Activated CD4-positive, alpha-beta T cell treated with anti-CD3 and anti-CD28 coated beads, Interleukin-2, amount 10 ng/mL, durations not matched to agents 24 days and 14 days (primary cell): ENCODE measurements at regions of chr6 and their contacts with region 1.

Region 1: GRCh38 chr6:85593438-85594196 is at the start of gene SNX14:
- DNase-seq: peak; percentile 93
- H3K4me3 Mint-ChIP-seq: peak within 1 kb of the TSS; percentile 97
- H3K27ac Mint-ChIP-seq: peak within 1 kb of the TSS; percentile 96
- H3K4me1 Mint-ChIP-seq: peaks cover 20% of the 10 kb centered on the region
- H3K27me3 Mint-ChIP-seq: peaks cover 3% of the 10 kb centered on the region
- total RNA-seq, gene SNX14: 45.4 and 47.1 TPM in 2 replicates

Region 2: DNA sequence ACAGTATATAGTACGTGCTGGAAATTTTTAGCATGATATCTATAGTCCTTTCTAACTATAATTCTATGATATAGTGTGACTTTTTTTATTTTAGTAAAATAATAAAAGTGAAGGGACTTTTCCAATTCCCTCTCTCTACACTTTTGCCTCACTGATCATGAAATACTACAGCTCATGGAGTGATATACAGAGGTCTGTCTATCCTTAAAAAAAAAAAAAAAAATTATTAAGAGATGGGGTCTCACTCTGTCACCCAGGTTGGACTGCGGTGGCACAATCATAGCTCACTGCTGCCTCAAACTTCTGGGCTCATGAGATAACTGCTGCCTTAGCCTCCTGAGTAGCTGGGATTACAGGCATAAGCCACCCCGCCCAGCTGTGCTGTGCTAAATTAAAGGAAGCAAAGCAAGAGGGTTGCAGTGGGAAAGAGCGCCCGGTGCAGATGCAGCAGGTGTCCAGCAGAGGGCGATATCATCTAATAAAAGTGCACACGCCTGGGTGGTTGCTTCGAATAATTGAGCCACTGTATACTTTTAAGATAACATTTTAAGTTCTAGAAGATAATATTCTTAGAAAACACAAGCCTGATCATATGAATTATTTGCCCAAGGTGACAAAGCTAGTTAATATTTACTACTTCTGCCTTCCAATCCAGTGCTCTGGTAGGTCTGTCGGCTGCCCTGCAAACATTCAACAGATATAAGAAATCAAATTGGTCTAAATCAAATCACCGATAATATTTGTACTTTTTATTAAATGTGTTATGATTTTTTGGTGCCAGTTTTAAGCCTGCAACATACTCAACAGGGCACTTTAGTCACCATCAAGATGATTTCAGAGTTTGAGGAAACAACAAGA is 238.6 kb before region 1 on chr6:
- intact Hi-C with region 1: loop called (anchors 10 kb)
- DNase-seq: peak; percentile 90
- H3K4me3 Mint-ChIP-seq: no peak overlapping the region
- H3K27ac Mint-ChIP-seq: no peak overlapping the region
- H3K4me1 Mint-ChIP-seq: no peaks in the 10 kb centered on the region
- H3K27me3 Mint-ChIP-seq: peaks cover 6% of the 10 kb centered on the region

Region 3: DNA sequence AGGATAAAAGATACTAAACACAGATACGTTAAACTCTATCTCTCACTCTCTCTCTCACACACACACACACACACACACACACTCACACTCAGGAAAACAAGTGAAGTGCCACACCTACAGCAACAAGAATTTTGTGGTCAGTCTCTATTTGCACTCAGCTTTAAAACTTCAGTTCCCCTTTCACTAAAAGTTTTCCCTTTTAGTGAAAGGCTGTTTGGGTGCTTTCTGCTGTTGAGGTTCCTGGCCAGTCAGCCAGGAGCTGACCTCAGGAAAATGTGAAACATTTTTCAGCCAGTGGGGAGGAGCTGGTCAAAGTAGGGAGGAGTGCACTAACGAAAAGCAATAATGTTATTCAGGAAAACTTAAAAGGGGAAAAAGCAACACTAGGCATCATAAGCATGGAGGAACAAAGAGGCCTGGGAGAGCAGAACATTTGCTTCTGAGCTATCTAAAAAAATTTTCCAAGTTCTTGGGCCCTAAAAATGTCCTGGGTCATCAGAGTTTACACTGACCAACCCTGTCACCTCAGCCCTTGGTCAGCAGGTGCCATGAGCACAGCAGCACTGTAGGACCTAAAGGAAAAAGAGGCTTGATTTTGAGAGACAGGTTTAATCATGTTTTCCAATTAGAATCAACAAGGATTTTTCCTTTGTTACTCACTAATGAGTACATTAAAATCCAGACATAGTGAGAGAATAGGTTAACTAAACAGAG is 174.4 kb before region 1 on chr6:
- intact Hi-C with region 1: no loop called
- DNase-seq: peak; percentile 56
- H3K4me3 Mint-ChIP-seq: peak overlapping the region; percentile 41
- H3K27ac Mint-ChIP-seq: peak overlapping the region; percentile 64
- H3K4me1 Mint-ChIP-seq: peaks cover 33% of the 10 kb centered on the region
- H3K27me3 Mint-ChIP-seq: peaks cover 8% of the 10 kb centered on the region

Region 4: GRCh38 chr6:85612690-85613474 is 19.3 kb after region 1 on chr6:
- intact Hi-C with region 1: loop called (anchors 2 kb)
- DNase-seq: no peak
- H3K4me3 Mint-ChIP-seq: no peak overlapping the region
- H3K27ac Mint-ChIP-seq: no peak overlapping the region
- H3K4me1 Mint-ChIP-seq: peaks cover 6% of the 10 kb centered on the region
- H3K27me3 Mint-ChIP-seq: no peaks in the 10 kb centered on the region

Region 5: DNA sequence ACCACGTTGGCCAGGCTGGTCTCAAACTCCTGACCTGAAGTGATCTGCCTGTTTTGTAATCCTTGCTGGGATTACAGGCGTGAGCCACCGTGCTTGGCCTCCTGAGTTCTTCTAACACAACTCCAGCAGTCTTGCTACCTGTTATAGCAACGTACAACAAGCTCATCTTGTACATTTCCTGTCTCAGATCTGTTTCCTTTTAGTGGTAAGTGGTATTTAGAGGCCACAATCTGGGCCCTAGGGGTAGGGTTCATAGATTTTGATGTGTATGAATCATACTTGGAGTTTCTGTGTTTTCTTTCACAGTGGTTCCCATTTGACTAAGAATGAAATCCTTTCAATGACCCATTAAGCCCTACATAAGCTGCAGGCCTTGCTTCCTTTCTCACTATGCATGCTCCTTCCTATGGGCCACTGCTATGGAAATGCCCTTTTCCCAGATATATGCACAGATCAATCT is 76.1 kb after region 1 on chr6:
- intact Hi-C with region 1: loop called (anchors 2 kb)
- DNase-seq: peak; percentile 86
- H3K4me3 Mint-ChIP-seq: peak overlapping the region; percentile 78
- H3K27ac Mint-ChIP-seq: peak overlapping the region; percentile 89
- H3K4me1 Mint-ChIP-seq: peaks cover 44% of the 10 kb centered on the region
- H3K27me3 Mint-ChIP-seq: no peaks in the 10 kb centered on the region

Region 6: DNA sequence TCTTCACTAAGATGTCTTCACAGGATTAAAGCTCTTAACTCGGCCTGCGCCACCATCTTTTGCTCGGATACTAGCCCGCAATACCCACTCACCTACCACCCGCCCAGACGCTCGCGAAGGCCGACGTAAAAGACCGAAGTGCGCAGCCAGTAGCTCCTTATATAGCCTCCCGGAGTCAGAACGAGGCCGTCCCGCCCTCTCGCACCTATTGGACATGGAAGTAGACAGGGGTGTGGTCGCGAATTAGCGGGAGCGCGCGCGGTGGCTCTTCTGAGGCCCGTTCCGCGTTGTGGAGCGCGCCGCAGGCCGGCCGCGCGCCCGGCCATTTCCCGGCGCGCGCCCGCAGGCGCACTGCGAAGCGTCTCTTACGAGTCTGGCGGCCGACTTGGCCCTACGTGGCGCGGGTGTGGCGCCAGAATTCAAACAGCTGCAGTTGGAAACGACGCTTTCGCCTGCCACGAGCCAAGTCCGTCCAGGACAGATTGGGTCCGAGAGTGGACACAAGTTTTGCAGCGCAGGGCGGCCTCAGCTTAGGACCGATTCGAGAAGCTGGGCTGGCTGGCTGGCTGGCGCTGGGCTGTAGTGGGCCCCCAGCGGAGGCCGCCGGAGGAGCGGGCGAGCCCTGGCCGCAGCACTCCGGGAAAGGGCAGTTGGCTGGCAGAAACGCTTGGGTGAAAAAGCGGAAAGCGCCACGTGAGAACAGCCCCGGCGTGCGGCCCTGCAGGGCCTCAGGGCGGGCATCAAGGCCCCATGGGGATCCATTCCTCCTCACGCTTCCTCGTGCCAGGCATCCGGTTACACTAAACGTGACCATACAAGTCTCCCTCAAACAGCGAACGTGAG is 85.2 kb after region 1 on chr6:
- intact Hi-C with region 1: loop called (anchors 1 kb)
- DNase-seq: peak; percentile 99
- H3K4me3 Mint-ChIP-seq: peak overlapping the region; percentile 95
- H3K27ac Mint-ChIP-seq: peak overlapping the region; percentile 97
- H3K4me1 Mint-ChIP-seq: peaks cover 38% of the 10 kb centered on the region
- H3K27me3 Mint-ChIP-seq: no peaks in the 10 kb centered on the region